PC-9 (cell line): ENCODE measurements at regions of chr3 and their contacts with region 1.

Region 1: GRCh38 chr3:142595951-142596725 is at the start of gene PLS1:
- DNase-seq: peak; percentile 80 to 99
- H3K4me3 ChIP-seq: peak within 1 kb of the TSS; percentile 73
- H3K27ac ChIP-seq: peak within 1 kb of the TSS; percentile 91
- H3K4me1 ChIP-seq: peaks cover 30% of the 10 kb centered on the region
- H3K27me3 ChIP-seq: no peaks in the 10 kb centered on the region
- CTCF ChIP-seq: no peak
- total RNA-seq, gene PLS1: 50.4 and 53.8 TPM in 2 replicates

Region 2: DNA sequence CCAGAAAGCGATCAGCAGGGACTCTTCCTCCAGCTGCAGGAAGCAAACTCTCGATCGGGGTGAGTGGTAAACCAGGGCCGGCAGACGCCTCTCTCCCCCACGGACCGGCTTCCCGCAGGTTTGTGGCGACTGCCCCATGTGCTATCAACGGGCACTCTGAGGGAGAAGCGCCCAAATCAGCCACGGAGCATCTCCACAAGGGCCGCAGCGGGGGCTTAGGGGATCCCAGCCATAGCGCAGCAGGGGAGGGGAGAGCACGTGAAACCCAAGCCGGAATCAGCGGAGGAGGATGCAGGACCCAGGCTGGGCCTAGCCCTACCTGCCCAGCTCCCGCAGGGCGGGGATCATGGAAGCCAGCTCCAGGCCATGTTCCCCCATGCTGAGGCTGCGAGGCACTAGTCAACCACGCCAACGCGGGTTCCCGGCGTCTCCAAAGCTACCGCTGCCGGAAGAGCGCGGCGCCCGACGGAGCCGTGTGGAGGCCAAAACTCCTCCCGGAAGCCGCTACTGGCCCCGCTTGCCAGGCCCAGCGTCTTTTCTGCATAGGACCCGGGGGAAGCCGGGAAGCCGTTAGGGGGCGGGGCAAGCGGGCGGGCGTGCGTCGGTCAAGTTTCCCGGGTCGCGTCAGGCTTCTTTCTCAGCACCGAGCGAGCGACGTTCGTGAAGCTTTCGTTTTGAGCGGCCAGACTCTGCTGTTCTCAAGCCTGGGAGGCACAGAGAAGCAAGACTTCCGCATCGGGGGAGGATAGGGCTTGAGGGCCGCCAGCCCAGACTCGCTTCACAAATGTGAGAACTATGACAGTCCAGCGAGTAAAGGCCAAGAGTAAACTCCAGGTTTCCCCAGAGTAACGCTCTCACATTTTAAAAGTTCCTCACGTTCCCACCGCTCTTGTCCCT is 17.6 kb before region 1 on chr3 and contains the start of gene ATR:
- CTCF ChIA-PET with region 1: no interaction called
- POLR2A ChIA-PET with region 1: interaction called, 3 read pairs
- intact Hi-C with region 1: loop called (anchors 1 kb)
- DNase-seq: peak; percentile 89 to 98
- H3K4me3 ChIP-seq: peak within 1 kb of the TSS; percentile 98
- H3K27ac ChIP-seq: peak within 1 kb of the TSS; percentile 81
- H3K4me1 ChIP-seq: peaks cover 28% of the 10 kb centered on the region
- H3K27me3 ChIP-seq: no peaks in the 10 kb centered on the region
- CTCF ChIP-seq: no peak
- total RNA-seq, gene ATR: 28.3 and 33.3 TPM in 2 replicates

Region 3: DNA sequence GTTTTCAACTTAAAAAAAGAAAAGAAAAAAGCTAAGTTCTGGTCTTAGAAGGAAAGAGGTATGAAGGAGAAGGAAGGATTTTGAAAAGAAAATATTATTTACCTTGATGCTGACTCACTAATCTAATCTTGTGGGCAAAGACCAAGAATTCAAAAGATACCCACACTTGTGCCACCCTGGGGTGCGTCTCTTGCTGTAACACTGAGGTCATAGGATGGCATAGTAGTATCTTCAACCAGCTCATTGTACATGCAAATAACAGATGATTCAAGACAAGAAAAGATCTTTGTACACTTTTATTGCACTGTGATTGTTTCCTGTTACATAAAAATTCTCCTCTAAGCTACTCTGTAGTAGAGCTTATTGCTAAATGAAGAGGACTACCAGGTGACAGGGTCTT is 17.4 kb after region 1 on chr3:
- CTCF ChIA-PET with region 1: interaction called, 5 read pairs
- POLR2A ChIA-PET with region 1: no interaction called
- intact Hi-C with region 1: loop called (anchors 1 kb)
- DNase-seq: peak; percentile 23 to 54
- H3K4me3 ChIP-seq: no peak overlapping the region
- H3K27ac ChIP-seq: peak overlapping the region; percentile 51
- H3K4me1 ChIP-seq: peaks cover 28% of the 10 kb centered on the region
- H3K27me3 ChIP-seq: no peaks in the 10 kb centered on the region
- CTCF ChIP-seq: no peak

Region 4: DNA sequence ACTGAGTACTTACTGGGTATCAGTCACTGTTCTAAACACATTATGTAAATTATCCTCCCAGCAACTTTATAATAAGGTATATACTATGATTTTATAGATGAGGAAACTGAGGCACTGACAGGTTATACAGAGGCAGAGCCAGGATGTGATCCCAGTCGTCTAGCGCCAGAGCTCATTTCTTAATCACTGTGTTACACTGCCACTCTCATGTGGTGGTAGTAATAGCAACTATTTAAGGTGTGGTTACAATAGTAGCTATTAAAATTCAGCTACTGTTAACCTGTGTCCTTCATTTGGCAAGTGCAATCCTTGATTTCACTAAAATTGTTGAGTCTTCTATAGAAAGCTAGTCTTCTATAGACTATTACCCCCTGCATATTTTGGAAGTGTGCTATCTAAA is 84.6 kb after region 1 on chr3:
- CTCF ChIA-PET with region 1: no interaction called
- POLR2A ChIA-PET with region 1: no interaction called
- intact Hi-C with region 1: loop called (anchors 5 kb)
- DNase-seq: no peak
- H3K4me3 ChIP-seq: no peak overlapping the region
- H3K27ac ChIP-seq: no peak overlapping the region
- H3K4me1 ChIP-seq: no peaks in the 10 kb centered on the region
- H3K27me3 ChIP-seq: no peaks in the 10 kb centered on the region
- CTCF ChIP-seq: no peak

Region 5: DNA sequence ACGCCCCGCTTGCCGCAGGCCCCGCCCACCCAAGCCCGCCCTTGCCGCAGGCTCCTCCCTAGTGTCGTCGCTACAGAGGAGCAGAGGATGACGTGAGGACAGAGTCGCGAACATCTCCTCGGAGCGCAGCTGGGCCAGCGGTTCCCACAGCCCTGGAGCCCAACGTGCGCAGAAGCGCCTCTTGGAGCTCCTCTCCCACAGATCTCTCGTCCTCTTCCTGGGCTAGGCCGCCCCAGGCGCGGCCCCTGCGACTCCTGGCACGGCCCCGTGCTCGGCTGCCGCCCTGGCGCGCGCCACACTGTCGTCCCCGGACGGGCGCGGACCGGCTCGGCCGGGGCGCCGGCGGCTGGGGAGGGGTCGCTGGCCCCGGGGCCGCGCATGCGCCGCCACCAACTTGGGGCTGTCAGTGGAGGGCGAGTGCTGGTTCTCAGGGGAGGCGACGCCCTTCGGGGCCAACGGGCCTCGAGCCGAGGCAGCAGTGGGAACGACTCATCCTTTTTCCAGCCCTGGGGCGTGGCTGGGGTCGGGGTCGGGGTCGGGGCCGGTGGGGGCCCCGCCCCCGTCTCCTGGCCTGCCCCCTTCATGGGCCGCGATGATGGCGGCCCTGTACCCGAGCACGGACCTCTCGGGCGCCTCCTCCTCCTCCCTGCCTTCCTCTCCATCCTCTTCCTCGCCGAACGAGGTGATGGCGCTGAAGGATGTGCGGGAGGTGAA is 128.0 kb after region 1 on chr3 and contains the start of gene TRPC1:
- CTCF ChIA-PET with region 1: no interaction called
- POLR2A ChIA-PET with region 1: no interaction called
- intact Hi-C with region 1: loop called (anchors 2 kb)
- DNase-seq: peak; percentile 56 to 73
- H3K4me3 ChIP-seq: peak within 1 kb of the TSS; percentile 76
- H3K27ac ChIP-seq: no peak within 1 kb of the TSS
- H3K4me1 ChIP-seq: no peaks in the 10 kb centered on the region
- H3K27me3 ChIP-seq: no peaks in the 10 kb centered on the region
- CTCF ChIP-seq: no peak
- total RNA-seq, gene TRPC1: 3.8 and 6.9 TPM in 2 replicates